Activated naive CD4-positive, alpha-beta T cell treated with anti-CD3 and anti-CD28 coated beads for 36 hours (primary cell): ENCODE measurements at regions of chr3 and their contacts with region 1.

Region 1: GRCh38 chr3:195442573-195443390 is at the start of gene ACAP2:
- DNase-seq: peak; percentile 99
- H3K4me3 Mint-ChIP-seq: peak within 1 kb of the TSS; percentile 93
- H3K27ac Mint-ChIP-seq: peak within 1 kb of the TSS; percentile 89
- H3K4me1 Mint-ChIP-seq: peaks cover 45% of the 10 kb centered on the region
- H3K27me3 Mint-ChIP-seq: no peaks in the 10 kb centered on the region
- total RNA-seq, gene ACAP2: 37.9 to 42.1 TPM

Region 2: DNA sequence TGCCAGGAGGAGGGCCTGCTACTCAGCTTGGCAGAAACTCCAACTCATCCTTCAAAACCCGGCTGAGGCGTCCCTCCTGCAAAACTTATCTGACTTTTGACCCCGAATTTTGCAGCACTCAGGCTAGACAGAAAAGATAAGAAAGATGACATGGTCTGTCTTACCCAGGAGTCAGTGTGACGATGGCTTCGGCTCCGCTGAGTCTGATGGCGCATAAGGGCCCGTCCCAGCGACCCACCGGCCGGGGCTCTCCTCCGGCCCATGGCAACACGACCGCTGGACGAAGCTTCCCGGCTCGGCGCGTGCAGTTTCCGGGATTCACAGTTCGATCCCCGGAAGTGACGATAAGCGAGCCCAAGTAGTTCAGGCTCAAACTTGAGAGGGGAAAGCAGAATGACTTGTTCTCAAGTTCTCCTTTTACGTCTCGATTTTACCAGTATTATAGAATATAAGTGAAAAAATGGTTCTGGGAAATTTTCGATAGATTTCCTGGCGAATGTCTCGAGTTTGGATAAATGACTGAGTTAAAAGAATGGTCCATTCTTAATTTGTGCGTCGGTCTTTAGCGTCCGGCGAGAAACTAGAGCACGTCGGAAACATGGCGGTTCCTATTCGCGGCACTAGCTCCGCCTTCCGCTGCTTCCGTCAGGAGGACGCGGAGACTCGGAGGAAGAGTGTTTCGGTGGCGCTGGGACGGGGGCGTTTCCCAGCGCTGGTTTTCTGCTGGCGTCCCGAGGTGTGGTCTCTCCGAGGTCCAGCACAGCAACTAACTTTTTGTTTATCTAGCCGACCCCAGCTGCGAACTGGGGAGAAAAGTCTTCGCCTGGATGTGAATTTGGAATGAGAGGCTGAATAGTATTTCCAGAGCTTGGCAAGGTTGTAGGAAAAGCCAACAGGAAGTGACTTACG is 770.6 kb before region 1 on chr3 and contains the start of gene LSG1:
- CTCF ChIA-PET with region 1: no interaction called
- intact Hi-C with region 1: loop called (anchors 10 kb)
- DNase-seq: peak; percentile 94
- H3K4me3 Mint-ChIP-seq: peak within 1 kb of the TSS; percentile 99
- H3K27ac Mint-ChIP-seq: peak within 1 kb of the TSS; percentile 97
- H3K4me1 Mint-ChIP-seq: peaks cover 55% of the 10 kb centered on the region
- H3K27me3 Mint-ChIP-seq: no peaks in the 10 kb centered on the region
- total RNA-seq, gene LSG1: 26.4 to 27.0 TPM

Region 3: DNA sequence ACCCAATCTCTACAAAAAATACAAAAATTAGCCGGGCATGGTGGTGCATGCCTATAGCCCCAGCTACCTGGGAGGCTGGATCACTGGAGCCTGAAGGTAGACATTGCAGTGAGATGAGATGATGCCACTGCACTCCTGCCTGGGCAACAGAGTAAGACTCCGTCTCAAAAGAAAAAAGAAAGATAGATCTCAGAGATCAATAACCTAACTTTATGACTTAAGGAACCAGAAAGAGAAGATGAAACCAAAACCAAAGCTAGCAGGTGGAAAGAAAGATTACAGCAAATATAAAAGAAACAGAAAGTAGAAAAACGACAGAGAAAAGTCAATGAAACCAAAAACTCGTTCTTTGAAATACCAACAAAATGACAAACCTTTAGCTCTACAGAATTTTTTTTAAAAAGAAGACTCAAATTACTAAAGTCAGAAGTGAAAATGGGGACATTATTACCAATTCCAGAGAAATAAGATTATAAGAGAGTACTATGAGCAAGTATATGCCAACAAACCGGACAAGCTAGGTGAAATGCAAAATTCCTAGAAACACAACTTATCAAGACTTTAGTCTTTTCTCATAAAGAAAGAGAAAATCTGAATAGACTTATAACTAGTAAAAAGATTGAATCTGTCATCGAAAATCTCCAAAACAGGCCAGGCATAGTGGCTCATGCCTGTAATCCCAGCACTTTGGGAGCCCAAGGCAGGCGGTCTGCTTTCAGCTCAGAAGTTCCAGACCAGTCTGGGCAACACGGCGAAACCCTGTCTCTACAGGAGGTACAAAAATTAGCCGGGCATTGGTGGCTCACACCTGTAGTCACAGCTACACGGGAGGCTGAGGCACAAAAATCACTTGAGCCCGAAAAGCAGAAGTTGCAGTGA is 35.0 kb before region 1 on chr3:
- CTCF ChIA-PET with region 1: no interaction called
- intact Hi-C with region 1: loop called (anchors 1 kb)
- DNase-seq: no peak
- H3K4me3 Mint-ChIP-seq: peak overlapping the region; percentile 28
- H3K27ac Mint-ChIP-seq: no peak overlapping the region
- H3K4me1 Mint-ChIP-seq: peaks cover 47% of the 10 kb centered on the region
- H3K27me3 Mint-ChIP-seq: no peaks in the 10 kb centered on the region

Region 4: DNA sequence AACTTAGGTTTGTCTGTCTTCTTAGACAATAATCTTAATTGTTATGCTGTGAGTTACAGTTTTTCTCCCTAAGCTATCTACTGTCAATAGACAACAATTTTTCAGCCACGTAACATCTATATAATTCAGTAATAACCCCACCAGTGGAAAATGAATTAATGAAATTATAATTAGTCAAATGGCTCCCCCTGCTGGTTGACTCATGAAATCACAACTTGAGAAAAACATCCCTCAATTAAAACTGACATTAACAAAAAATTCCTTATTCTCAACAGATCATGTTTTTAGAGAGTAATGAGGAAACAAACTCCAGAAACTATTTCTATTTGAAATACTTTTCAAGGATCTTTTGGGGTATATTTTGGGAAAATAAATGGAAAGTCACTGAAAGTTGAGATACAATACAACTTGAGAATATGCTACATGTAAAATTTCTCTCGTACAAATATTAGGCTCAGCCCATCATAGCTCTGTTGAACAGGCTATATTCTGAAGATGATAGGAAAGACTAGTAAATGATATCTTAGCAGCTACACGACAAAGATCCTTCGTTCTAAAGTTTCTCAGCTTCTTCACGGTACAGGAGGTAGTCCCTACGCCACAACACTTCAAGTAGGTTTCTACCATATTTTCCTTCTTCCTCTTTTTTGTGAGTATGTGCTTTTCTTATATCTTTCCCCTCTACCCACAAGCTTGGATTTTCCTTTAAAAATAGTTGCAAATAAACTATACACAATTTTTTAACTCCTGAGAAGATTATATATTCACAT is 79.7 kb after region 1 on chr3:
- CTCF ChIA-PET with region 1: interaction called, 4 read pairs
- intact Hi-C with region 1: loop called (anchors 5 kb)
- DNase-seq: no peak
- H3K4me3 Mint-ChIP-seq: no peak overlapping the region
- H3K27ac Mint-ChIP-seq: peak overlapping the region; percentile 69
- H3K4me1 Mint-ChIP-seq: peaks cover 50% of the 10 kb centered on the region
- H3K27me3 Mint-ChIP-seq: no peaks in the 10 kb centered on the region

Region 5: GRCh38 chr3:195909644-195910508 is 467.1 kb after region 1 on chr3:
- CTCF ChIA-PET with region 1: no interaction called
- intact Hi-C with region 1: loop called (anchors 2 kb)
- DNase-seq: peak; percentile 89
- H3K4me3 Mint-ChIP-seq: peak overlapping the region; percentile 70
- H3K27ac Mint-ChIP-seq: no peak overlapping the region
- H3K4me1 Mint-ChIP-seq: peaks cover 33% of the 10 kb centered on the region
- H3K27me3 Mint-ChIP-seq: no peaks in the 10 kb centered on the region